ENCODE measurements at regions of chr14 and their contacts with region 1.

Region 1: GRCh38 chr14:74612350-74613021 is 449 bp upstream of the LTBP2 start:
- DNase-seq: peak; percentile 65 to 83
- ATAC-seq: peak; percentile 71 to 89 (median 80)
- H3K4me3 ChIP-seq: peak overlapping the region; percentile 47 to 86 (median 68)
- H3K27ac ChIP-seq: peak overlapping the region in 9 of 10 donors; percentile 28 to 86 (median 71)
- H3K4me1 ChIP-seq: peaks cover 3 to 66% (median 17%) of the 10 kb centered on the region in 9 donors
- H3K27me3 ChIP-seq: peaks cover 0 to 43% (median 21%) of the 10 kb centered on the region in 7 donors
- CTCF ChIP-seq: peak; percentile 53 to 92 (median 73)

Region 2: GRCh38 chr14:74493343-74494261 is 118.9 kb before region 1 on chr14 and contains the start of gene ISCA2:
- intact Hi-C with region 1: loop called in 1 of 10 experiments (anchors 10 kb)
- DNase-seq: peak; percentile 100
- ATAC-seq: peak; percentile 96 to 98 (median 96)
- H3K4me3 ChIP-seq: peak within 1 kb of the TSS; percentile 66 to 98 (median 88)
- H3K27ac ChIP-seq: peak within 1 kb of the TSS; percentile 79 to 97 (median 92)
- H3K4me1 ChIP-seq: peaks cover 3 to 64% (median 56%) of the 10 kb centered on the region in 9 donors
- H3K27me3 ChIP-seq: no peaks in the 10 kb centered on the region
- CTCF ChIP-seq: no peak
- total RNA-seq, gene ISCA2: 32.0 to 44.3 (median 40.3) TPM

Region 3: DNA sequence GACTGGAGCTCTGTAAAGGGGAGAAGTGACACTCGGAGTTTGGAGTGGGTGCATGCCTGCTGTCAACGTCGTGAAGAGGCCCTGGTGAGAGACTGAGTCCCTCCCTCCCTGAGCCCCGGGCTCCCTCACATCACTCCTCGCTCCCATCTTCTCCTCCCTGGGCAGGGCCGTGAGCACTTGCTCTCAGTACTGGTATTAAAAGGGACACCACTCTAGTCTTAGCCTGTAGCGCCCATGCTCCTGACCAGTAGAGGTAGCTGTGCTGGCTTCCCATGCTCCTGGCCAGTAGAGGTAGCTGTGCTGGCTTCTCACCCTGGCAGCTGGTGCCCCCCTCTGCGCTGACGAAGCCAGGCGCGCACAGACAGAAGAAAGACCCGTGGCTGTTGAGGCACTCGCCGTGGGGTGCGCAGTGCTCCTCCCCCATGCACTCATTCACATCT is 104.2 kb before region 1 on chr14:
- intact Hi-C with region 1: loop called in 3 of 10 experiments (anchors 5 to 10 kb)
- DNase-seq: no peak
- ATAC-seq: no peak
- H3K4me3 ChIP-seq: no peak overlapping the region
- H3K27ac ChIP-seq: no peak overlapping the region
- H3K4me1 ChIP-seq: peaks cover 0 to 9% (median 0%) of the 10 kb centered on the region in 9 donors
- H3K27me3 ChIP-seq: peaks cover 0 to 6% (median 0%) of the 10 kb centered on the region in 7 donors
- CTCF ChIP-seq: peak in 3 of 9 donors; percentile 18 to 32 (median 21)

Region 4: GRCh38 chr14:74655599-74656389 is 43.3 kb after region 1 on chr14:
- intact Hi-C with region 1: loop called in 2 of 10 experiments (anchors 5 kb)
- DNase-seq: no peak
- ATAC-seq: no peak
- H3K4me3 ChIP-seq: no peak overlapping the region
- H3K27ac ChIP-seq: peak overlapping the region in 1 of 10 donors; percentile 13
- H3K4me1 ChIP-seq: peaks cover 0 to 10% (median 0%) of the 10 kb centered on the region in 9 donors
- H3K27me3 ChIP-seq: no peaks in the 10 kb centered on the region
- CTCF ChIP-seq: no peak

Region 5: DNA sequence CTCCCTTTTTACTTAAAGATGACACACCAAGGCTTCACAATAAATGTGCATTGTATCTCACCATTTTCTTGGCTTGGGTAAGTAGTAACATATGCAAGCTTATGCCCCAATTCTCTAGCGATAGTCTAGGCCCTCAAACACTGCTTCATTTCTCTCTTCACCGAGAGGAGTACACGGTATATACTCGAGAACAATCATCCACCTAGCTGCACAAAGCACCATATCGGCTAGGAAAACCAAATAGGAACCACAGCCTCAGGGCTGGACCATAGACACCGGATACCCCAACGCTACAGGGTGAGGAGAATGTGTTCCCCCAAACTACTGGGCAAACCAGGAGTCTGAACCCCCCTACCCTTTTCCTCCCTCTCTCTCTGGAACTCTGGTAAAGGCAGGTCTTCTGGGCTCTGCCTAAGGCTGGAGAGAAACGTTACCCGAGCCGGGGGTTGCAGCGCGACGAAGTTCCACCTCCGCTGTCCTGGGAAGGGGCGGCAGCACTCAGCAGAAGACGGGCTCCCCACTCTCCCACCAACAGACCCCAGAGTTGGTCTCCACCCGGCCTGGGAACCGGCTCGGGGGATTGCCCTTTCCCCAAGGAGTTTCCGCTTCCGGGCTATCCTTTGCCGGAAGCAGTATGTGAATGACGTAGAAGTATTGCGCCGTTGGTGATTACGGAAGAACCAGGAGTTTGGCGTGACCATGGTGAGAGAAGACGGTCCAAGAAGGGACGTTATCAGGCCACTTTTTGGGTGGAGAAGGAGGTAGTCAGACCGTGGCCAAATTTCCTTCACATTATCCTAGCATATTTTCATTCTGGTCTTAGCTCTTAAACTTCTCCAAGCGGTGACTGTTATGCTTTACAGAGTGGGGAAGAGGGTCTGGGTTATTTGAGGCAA is 100.3 kb after region 1 on chr14 and contains the starts of genes AREL1 and FCF1:
- intact Hi-C with region 1: loop called in 4 of 10 experiments (anchors 2 to 10 kb)
- DNase-seq: peak; percentile 68 to 90
- ATAC-seq: peak; percentile 97 to 100 (median 99)
- H3K4me3 ChIP-seq: peak within 1 kb of the TSS; percentile 65 to 93 (median 82)
- H3K27ac ChIP-seq: peak within 1 kb of the TSS in 9 of 10 donors; percentile 70 to 90 (median 86)
- H3K4me1 ChIP-seq: peaks cover 0 to 53% (median 37%) of the 10 kb centered on the region in 9 donors
- H3K27me3 ChIP-seq: no peaks in the 10 kb centered on the region
- CTCF ChIP-seq: no peak
- total RNA-seq, gene AREL1: 18.1 to 27.2 (median 20.9) TPM
- total RNA-seq, gene FCF1: 31.7 to 45.5 (median 37.2) TPM

Region 6: DNA sequence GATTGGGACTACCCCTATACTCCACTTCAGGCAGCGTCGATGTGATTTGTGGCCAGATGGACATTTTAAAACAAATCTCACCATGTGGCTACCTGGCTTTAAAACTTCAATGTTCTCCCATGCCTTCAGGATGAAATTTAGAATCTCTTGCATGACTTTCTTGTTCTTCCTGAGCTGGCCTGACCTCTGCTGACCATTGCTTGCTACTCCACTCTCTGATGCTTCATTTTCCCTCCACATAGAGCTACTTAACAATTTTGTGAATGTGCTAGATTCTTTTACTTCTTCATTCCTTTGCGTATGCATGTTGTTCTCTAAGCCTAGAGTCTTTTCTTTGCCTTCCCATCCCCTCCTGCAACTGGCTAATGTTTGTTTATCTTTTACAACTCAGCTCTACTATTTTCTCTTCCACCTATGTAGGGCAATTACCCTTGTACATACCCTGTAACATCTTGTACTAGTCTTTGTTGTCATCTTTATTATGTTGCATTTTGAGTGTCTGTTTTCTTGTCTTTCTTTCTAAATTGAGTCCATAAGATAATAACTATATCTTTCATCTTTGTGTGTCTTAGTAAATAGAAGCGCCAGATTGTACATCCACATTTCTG is 191.8 kb after region 1 on chr14:
- intact Hi-C with region 1: loop called in 8 of 10 experiments (anchors 2 to 10 kb)
- DNase-seq: no peak
- ATAC-seq: peak in 2 of 8 donors; percentile 47
- H3K4me3 ChIP-seq: no peak overlapping the region
- H3K27ac ChIP-seq: no peak overlapping the region
- H3K4me1 ChIP-seq: peaks cover 0 to 4% (median 0%) of the 10 kb centered on the region in 9 donors
- H3K27me3 ChIP-seq: no peaks in the 10 kb centered on the region
- CTCF ChIP-seq: peak in 8 of 9 donors; percentile 30 to 68 (median 52)